Activated CD4-positive, alpha-beta T cell treated with anti-CD3 and anti-CD28 coated beads for 36 hours (primary cell): ENCODE measurements at regions of chr20 and their contacts with region 1.

Region 1: DNA sequence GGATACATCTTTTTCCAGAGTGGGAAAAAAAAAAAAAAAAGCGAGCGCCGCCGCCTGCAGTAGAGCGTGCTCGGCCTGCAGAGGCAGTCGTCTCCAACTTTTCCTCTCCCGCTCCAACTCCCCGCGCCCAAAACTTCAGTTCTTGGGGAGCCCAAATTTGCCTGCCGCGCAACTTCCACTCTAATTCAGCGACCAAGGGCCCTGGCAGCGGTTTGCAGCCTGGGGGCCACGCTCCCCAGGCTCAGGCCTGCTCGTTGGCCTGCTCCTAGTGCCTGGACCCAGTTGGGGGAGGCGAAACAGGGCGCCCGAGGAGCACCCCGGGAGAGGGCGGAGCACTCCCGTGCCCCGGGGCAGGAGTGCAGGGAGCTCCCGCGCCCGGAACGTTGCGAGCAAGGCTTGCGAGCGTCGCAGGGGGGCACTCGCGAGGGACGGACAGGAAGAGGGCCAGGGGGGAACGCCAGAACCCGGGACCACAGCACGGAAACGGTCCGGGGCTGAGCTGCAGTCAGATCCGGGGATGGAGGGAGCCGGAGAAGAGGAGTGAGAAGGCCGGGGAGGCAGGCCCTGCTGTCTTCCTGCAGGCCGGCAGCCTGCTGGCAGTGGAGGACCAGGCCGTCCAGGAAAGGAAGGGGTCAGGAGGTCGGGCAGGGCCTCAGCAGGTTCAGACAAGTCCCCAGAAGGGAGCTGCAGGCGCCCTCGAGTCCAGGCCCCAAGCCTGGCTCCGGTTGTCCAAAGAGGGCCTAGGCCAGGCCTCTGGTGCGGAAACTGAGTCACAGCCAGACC is at the start of gene STX16:
- DNase-seq: peak; percentile 95
- ATAC-seq: peak; percentile 84
- H3K4me3 Mint-ChIP-seq: peak within 1 kb of the TSS; percentile 100
- H3K27ac Mint-ChIP-seq: peak within 1 kb of the TSS; percentile 100
- H3K4me1 Mint-ChIP-seq: peaks cover 19% of the 10 kb centered on the region
- H3K27me3 Mint-ChIP-seq: no peaks in the 10 kb centered on the region
- total RNA-seq, gene STX16: 101 to 110 TPM

Region 2: GRCh38 chr20:57351042-57351783 is 1299.8 kb before region 1 on chr20 and contains the start of gene RAE1:
- CTCF ChIA-PET with region 1: no interaction called
- POLR2A ChIA-PET with region 1: no interaction called
- intact Hi-C with region 1: loop called in 1 of 2 experiments (anchors 5 kb)
- DNase-seq: peak; percentile 94
- ATAC-seq: peak; percentile 84
- H3K4me3 Mint-ChIP-seq: peak within 1 kb of the TSS; percentile 96
- H3K27ac Mint-ChIP-seq: peak within 1 kb of the TSS; percentile 89
- H3K4me1 Mint-ChIP-seq: peaks cover 37% of the 10 kb centered on the region
- H3K27me3 Mint-ChIP-seq: no peaks in the 10 kb centered on the region
- total RNA-seq, gene RAE1: 42.7 to 48.9 TPM

Region 3: GRCh38 chr20:57709931-57710799 is 940.8 kb before region 1 on chr20 and contains the start of gene PMEPA1:
- CTCF ChIA-PET with region 1: no interaction called
- POLR2A ChIA-PET with region 1: no interaction called
- intact Hi-C with region 1: loop called in 1 of 2 experiments (anchors 5 kb)
- DNase-seq: peak; percentile 95
- ATAC-seq: peak; percentile 91
- H3K4me3 Mint-ChIP-seq: peak within 1 kb of the TSS; percentile 79
- H3K27ac Mint-ChIP-seq: peak within 1 kb of the TSS; percentile 77
- H3K4me1 Mint-ChIP-seq: peaks cover 20% of the 10 kb centered on the region
- H3K27me3 Mint-ChIP-seq: peaks cover 6% of the 10 kb centered on the region
- total RNA-seq, gene PMEPA1: 1.6 to 1.8 TPM

Region 4: GRCh38 chr20:58407966-58408557 is 242.9 kb before region 1 on chr20:
- CTCF ChIA-PET with region 1: no interaction called
- POLR2A ChIA-PET with region 1: no interaction called
- intact Hi-C with region 1: loop called in 1 of 2 experiments (anchors 5 kb)
- DNase-seq: peak; percentile 54
- ATAC-seq: peak; percentile 90
- H3K4me3 Mint-ChIP-seq: peak overlapping the region; percentile 36
- H3K27ac Mint-ChIP-seq: peak overlapping the region; percentile 87
- H3K4me1 Mint-ChIP-seq: peaks cover 32% of the 10 kb centered on the region
- H3K27me3 Mint-ChIP-seq: no peaks in the 10 kb centered on the region

Region 5: DNA sequence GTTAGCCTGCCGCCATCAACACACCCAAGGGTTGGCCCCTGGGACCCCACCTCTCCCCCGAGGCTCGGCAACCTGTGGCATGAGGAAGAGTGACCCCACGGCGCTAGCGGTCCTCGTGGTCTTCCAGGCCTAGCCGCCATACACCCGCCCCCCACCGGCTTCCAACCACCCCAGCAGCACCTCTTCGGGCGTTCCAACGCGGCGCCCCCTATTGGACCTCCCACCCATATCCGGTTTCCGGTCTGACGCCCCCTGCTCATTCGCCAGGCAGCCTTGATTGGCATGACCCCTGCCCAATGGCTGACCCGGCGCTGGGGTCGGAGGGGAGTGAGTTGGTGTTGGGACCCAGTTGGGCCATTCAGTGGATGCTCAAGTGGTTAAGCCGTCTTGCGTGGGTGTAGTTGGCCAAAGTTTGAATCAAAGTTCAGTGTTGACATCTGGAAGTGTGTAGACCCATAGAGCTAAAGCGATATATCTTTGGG is 199.8 kb after region 1 on chr20 and contains the start of gene GNAS-AS1:
- CTCF ChIA-PET with region 1: interaction called, 4 read pairs
- POLR2A ChIA-PET with region 1: no interaction called
- intact Hi-C with region 1: loop called (anchors 1 to 5 kb)
- DNase-seq: peak; percentile 91
- ATAC-seq: peak; percentile 91
- H3K4me3 Mint-ChIP-seq: peak within 1 kb of the TSS; percentile 77
- H3K27ac Mint-ChIP-seq: peak within 1 kb of the TSS; percentile 59
- H3K4me1 Mint-ChIP-seq: peaks cover 27% of the 10 kb centered on the region
- H3K27me3 Mint-ChIP-seq: peaks cover 41% of the 10 kb centered on the region
- total RNA-seq, gene GNAS-AS1: 1.1 to 1.9 TPM

Region 6: DNA sequence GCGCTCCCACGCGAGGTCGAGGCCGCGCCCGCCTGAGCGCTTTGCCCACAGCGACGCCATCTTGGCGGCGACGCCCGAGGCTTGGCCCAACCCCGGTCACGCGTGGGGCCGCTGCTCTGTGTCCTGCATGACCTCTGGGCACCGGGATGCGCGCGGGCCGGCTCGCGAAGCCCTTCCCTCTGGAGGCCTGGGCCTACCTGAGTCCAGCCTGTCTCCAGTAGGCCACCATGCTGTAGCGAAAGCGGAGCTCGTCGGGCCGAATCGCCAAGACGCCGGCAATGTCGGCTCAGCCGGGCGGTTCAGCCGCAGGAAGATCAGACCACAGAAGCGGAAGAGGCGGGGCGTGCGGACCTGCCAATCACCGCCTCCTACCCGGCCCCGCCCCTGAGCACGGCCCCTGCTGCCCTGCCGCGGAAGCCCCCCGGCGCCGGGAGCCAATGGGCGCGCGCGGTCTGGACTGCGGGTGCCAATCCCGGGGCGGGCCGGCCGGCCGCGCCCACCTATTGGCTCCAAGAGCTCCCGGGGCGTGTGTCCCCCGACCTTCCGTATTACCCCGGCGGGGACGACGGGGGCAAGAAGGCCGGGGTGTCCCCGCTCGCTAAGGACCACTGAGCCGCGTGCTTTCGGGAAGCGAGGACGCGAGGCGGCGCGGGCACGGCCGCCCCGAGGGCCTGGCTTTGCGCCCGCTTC is 381.2 kb after region 1 on chr20 and contains the start of gene ATP5F1E:
- CTCF ChIA-PET with region 1: interaction called, 4 read pairs
- POLR2A ChIA-PET with region 1: interaction called, 3 read pairs
- intact Hi-C with region 1: loop called (anchors 2 kb)
- DNase-seq: peak; percentile 98
- ATAC-seq: peak; percentile 95
- H3K4me3 Mint-ChIP-seq: peak within 1 kb of the TSS; percentile 87
- H3K27ac Mint-ChIP-seq: peak within 1 kb of the TSS; percentile 96
- H3K4me1 Mint-ChIP-seq: peaks cover 73% of the 10 kb centered on the region
- H3K27me3 Mint-ChIP-seq: no peaks in the 10 kb centered on the region
- total RNA-seq, gene ATP5F1E: 63.5 to 76.1 TPM

Region 7: GRCh38 chr20:59403261-59403961 is 752.4 kb after region 1 on chr20:
- CTCF ChIA-PET with region 1: no interaction called
- POLR2A ChIA-PET with region 1: no interaction called
- intact Hi-C with region 1: loop called (anchors 5 kb)
- DNase-seq: peak; percentile 89
- ATAC-seq: peak; percentile 72
- H3K4me3 Mint-ChIP-seq: no peak overlapping the region
- H3K27ac Mint-ChIP-seq: peak overlapping the region; percentile 71
- H3K4me1 Mint-ChIP-seq: no peaks in the 10 kb centered on the region
- H3K27me3 Mint-ChIP-seq: peaks cover 2% of the 10 kb centered on the region